HAP-1 (cell line): ENCODE measurements at regions of chr6 and their contacts with region 1.

Region 1: DNA sequence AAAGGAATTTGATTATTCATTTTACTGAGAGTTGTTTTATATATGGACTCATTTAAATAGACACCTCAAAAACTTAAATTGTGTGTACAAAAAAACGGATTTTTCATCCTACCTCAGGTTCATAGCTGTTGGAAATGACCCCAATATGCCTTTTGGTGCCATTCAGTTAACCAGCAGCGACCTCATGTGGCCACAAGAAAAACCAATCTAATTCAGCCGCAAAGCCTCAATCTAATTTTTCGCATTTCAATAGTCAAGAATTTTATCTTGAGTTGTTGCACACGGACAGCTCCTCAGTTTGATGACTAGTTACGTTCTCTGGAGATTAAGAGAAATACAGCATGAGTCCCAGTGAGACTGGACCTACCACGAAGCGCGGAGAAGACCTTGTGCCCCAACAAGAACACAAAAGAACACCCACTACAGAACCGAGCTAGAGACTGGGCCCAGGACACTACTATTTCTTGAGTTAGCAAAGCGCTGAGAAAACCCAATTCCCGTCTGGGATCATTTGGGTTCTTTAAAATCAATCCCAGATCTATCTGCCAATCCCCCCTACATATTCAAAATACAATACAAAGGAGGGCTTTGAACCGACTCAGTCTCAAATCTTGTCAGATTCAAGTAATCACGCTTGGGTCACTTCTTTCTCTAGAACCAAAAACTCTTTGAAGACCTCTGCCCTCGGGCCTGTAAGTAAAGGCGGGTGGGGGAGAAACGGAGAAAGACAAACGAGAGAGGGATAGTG is 1.1 kb downstream of the TCP11 start:
- DNase-seq: peak; percentile 79 to 82
- H3K4me3 ChIP-seq: no peak overlapping the region
- H3K4me1 ChIP-seq: peaks cover 20% of the 10 kb centered on the region
- H3K27me3 ChIP-seq: no peaks in the 10 kb centered on the region

Region 2: DNA sequence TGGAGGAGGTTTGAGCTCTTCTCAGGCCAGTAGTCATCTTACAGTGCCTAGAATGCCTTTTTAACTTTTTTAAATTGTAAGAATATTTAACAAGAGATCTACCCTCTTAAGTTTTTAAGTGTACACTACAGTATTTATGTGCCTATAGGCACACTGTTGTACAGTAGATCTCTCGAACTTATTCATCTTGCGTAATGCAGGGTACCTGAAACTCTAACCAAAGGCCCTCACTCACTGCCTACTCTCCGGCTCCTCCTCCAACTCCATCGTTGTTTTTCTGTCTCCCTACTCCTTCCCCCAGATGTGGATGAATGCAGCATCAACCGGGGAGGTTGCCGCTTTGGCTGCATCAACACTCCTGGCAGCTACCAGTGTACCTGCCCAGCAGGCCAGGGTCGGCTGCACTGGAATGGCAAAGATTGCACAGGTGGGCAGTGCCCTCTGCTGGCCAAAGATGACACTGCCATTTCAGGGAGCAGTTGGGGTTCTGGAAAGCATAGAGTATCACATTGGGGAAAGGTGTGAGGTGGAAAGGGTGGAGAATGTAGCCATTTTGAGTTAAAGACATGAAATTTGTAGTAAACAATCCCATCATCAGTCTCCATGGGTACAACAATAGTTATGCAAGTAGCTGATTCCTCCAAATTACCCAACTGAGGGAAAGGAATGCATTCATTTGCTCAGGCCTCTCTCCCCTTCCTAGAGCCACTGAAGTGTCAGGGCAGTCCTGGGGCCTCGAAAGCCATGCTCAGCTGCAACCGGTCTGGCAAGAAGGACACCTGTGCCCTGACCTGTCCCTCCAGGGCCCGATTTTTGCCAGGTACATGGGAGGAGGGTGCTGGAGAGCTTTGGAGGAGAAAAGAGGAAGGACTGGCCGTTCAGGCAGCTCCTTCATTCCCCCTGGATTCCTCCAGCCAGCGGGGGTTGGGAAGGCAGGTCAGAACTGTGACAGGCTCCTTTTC is 101.0 kb after region 1 on chr6:
- in situ Hi-C with region 1: loop called (anchors 5 kb)
- DNase-seq: peak; percentile 60 to 86
- H3K4me3 ChIP-seq: no peak overlapping the region
- H3K4me1 ChIP-seq: no peaks in the 10 kb centered on the region
- H3K27me3 ChIP-seq: no peaks in the 10 kb centered on the region